ENCODE measurements at regions of chr7 and their contacts with region 1.

Region 1: GRCh38 chr7:18693406-18693805 is 197.9 kb downstream of the HDAC9 start:
- DNase-seq: no peak
- H3K4me3 Mint-ChIP-seq: no peak overlapping the region
- H3K27ac Mint-ChIP-seq: no peak overlapping the region
- H3K4me1 Mint-ChIP-seq: no peaks in the 10 kb centered on the region
- H3K27me3 Mint-ChIP-seq: no peaks in the 10 kb centered on the region

Region 2: DNA sequence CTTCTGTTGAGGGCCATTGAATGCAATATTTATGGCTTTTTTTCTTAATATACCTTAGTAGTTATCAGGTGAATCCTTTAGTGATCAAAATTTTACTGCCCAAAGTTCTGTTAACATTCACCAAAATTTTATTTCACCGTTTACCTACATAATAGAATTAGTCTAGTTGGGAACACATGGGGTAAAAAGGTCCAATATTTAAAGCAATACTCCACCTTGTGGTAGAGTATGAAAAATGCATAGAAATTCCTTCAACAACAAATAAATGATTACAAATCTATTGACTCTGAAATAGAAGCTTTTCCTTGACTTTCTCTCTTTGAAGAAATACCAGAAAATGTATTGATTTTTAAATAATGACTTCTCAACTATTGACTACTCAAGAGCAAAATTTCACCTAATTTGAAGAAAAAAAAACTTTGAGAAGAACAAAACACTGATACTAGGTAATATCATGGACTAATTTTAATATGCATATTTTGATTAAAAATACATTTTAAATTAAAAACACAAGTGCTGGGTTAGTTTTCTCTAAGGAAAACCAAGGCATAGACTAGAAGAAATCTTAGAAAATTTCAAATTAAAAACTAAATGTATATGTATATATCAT is 972.1 kb after region 1 on chr7:
- intact Hi-C with region 1: loop called (anchors 1 kb)
- DNase-seq: no peak
- H3K4me3 Mint-ChIP-seq: no peak overlapping the region
- H3K27ac Mint-ChIP-seq: no peak overlapping the region
- H3K4me1 Mint-ChIP-seq: no peaks in the 10 kb centered on the region
- H3K27me3 Mint-ChIP-seq: peaks cover 5% of the 10 kb centered on the region